OCI-LY7 (cell line): ENCODE measurements at regions of chr20 and their contacts with region 1.

Region 1: DNA sequence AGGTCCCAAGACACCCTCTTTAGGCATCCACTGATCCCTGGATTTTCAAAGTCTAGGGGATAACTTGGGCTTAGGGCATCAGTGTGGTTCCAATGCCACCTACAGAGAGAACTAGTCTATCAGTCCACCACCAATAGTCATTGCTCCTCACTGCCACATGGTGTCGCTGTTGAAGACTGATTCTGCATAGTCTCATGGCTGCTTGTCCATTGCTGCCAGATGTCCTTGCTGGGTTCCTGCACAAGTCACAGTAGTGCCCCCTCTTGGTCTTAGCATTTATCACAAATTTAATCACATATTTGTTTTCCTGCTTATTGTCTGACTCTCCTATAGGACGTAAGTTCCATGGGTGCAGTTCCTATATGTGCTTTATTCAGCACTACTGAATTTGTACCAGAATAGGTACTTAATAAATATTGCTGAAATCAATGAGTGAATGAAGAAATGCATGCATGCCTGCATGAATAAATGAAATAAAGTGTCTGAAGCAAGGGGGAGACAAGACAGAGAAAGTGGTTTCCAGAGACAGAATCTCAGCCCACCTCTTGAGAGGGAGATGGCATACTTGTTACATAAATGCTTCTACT is 45.9 kb upstream of the RALY start:
- DNase-seq: peak; percentile 87
- H3K4me3 ChIP-seq: no peak overlapping the region
- H3K27ac ChIP-seq: no peak overlapping the region
- H3K4me1 ChIP-seq: no peaks in the 10 kb centered on the region
- CTCF ChIP-seq: peak; percentile 100

Region 2: GRCh38 chr20:33971147-33971975 is 23.6 kb after region 1 on chr20:
- CTCF ChIA-PET with region 1: no interaction called
- POLR2A ChIA-PET with region 1: no interaction called
- intact Hi-C with region 1: no loop called
- DNase-seq: no peak
- H3K4me3 ChIP-seq: no peak overlapping the region
- H3K27ac ChIP-seq: no peak overlapping the region
- H3K4me1 ChIP-seq: no peaks in the 10 kb centered on the region
- CTCF ChIP-seq: no peak

Region 3: GRCh38 chr20:34022154-34022838 is 74.5 kb after region 1 on chr20:
- CTCF ChIA-PET with region 1: no interaction called
- POLR2A ChIA-PET with region 1: no interaction called
- intact Hi-C with region 1: loop called (anchors 2 kb)
- DNase-seq: peak; percentile 68
- H3K4me3 ChIP-seq: no peak overlapping the region
- H3K27ac ChIP-seq: peak overlapping the region; percentile 36
- H3K4me1 ChIP-seq: peaks cover 56% of the 10 kb centered on the region
- CTCF ChIP-seq: peak; percentile 82

Region 4: DNA sequence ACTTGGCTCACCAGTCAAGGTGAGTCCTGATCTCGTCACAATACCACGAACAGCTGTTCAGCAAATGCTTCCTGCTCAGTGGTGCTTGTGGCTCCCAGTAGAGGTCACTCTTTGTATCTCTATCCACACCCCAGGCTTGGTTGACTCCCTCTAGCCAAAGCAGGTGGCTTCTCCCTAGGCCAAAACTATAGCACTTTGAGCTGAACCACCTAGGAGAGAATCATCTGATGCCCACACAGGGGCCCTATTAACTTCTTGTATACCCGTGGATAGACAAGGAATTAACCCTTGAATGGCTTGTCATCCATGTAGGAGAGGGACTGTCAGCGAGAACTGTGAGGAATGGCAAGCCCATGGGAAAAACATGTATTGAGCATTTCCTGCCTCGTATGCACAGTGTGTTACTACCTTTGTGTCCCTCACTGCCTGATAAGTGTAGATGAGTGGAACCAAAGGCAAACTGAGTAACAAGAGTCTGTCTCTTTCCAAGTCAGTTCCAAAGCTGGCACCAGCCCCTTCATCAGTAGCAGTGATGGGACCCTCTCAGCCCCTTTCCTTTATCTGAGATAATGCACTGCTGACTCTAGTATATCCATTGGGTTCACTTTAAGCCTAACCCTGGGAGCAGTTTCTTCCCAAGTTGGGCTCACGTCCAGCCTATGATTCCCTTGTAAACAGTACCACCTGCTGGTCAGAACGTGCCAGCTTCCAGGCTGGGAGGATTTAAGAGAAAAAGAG is 121.7 kb after region 1 on chr20:
- CTCF ChIA-PET with region 1: no interaction called
- POLR2A ChIA-PET with region 1: no interaction called
- intact Hi-C with region 1: loop called (anchors 1 kb)
- DNase-seq: peak; percentile 84
- H3K4me3 ChIP-seq: no peak overlapping the region
- H3K27ac ChIP-seq: peak overlapping the region; percentile 38
- H3K4me1 ChIP-seq: peaks cover 21% of the 10 kb centered on the region
- CTCF ChIP-seq: peak; percentile 93